Heart right ventricle (tissue), 16 donors: ENCODE measurements at regions of chr2 and their contacts with region 1.

Region 1: GRCh38 chr2:69306822-69307578 is 80.0 kb downstream of the GFPT1 start:
- DNase-seq: peak; percentile 81 to 87
- ATAC-seq: peak; percentile 84 to 94 (median 89)
- H3K4me3 ChIP-seq: peak overlapping the region; percentile 42 to 69 (median 60)
- H3K27ac ChIP-seq: peak overlapping the region; percentile 51 to 90 (median 76)
- H3K4me1 ChIP-seq: peaks cover 3 to 48% (median 33%) of the 10 kb centered on the region in 9 donors
- H3K27me3 ChIP-seq: peaks cover 0 to 22% (median 8%) of the 10 kb centered on the region in 7 donors
- CTCF ChIP-seq: peak in 8 of 9 donors; percentile 77 to 91 (median 86)

Region 2: GRCh38 chr2:68943581-68944568 is 363.1 kb before region 1 on chr2:
- intact Hi-C with region 1: loop called in 9 of 10 experiments (anchors 1 to 10 kb)
- DNase-seq: peak; percentile 15 to 58
- ATAC-seq: peak; percentile 16 to 80 (median 74)
- H3K4me3 ChIP-seq: no peak overlapping the region
- H3K27ac ChIP-seq: no peak overlapping the region
- H3K4me1 ChIP-seq: peaks cover 0 to 10% (median 0%) of the 10 kb centered on the region in 9 donors
- H3K27me3 ChIP-seq: peaks cover 0 to 10% (median 3%) of the 10 kb centered on the region in 7 donors
- CTCF ChIP-seq: peak; percentile 63 to 88 (median 84)

Region 3: GRCh38 chr2:69012310-69013141 is 294.5 kb before region 1 on chr2:
- intact Hi-C with region 1: loop called in 7 of 10 experiments (anchors 1 to 5 kb)
- DNase-seq: peak; percentile 74 to 75
- ATAC-seq: peak; percentile 66 to 78 (median 74)
- H3K4me3 ChIP-seq: peak overlapping the region; percentile 53 to 89 (median 74)
- H3K27ac ChIP-seq: peak overlapping the region in 8 of 10 donors; percentile 56 to 86 (median 79)
- H3K4me1 ChIP-seq: peaks cover 0 to 32% (median 21%) of the 10 kb centered on the region in 9 donors
- H3K27me3 ChIP-seq: peaks cover 0 to 61% (median 38%) of the 10 kb centered on the region in 7 donors
- CTCF ChIP-seq: peak; percentile 56 to 83 (median 72)

Region 4: DNA sequence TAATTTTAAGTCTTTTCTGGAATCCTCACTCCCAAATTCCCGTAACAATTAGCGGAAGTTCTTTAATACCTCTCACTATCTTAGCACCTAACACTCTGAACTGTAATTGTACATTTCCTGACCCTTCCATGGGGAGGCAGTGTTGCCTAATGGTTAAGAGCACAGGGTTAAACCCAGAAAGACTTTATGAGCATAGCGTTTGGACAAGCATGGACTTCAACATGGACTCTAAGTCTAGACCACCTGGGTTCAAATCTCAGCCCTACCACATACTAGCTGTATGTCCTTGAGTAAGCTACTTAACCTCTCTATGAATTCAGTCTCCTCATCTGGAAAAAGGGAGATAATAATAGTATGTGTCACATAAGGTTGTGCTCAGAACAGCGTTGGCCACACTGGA is 281.0 kb before region 1 on chr2:
- intact Hi-C with region 1: loop called in 9 of 10 experiments (anchors 1 to 5 kb)
- DNase-seq: peak in 1 of 2 donors; percentile 41
- ATAC-seq: peak; percentile 67 to 91 (median 76)
- H3K4me3 ChIP-seq: no peak overlapping the region
- H3K27ac ChIP-seq: no peak overlapping the region
- H3K4me1 ChIP-seq: peaks cover 0 to 13% (median 2%) of the 10 kb centered on the region in 9 donors
- H3K27me3 ChIP-seq: peaks cover 0 to 1% (median 0%) of the 10 kb centered on the region in 7 donors
- CTCF ChIP-seq: peak; percentile 23 to 72 (median 64)

Region 5: DNA sequence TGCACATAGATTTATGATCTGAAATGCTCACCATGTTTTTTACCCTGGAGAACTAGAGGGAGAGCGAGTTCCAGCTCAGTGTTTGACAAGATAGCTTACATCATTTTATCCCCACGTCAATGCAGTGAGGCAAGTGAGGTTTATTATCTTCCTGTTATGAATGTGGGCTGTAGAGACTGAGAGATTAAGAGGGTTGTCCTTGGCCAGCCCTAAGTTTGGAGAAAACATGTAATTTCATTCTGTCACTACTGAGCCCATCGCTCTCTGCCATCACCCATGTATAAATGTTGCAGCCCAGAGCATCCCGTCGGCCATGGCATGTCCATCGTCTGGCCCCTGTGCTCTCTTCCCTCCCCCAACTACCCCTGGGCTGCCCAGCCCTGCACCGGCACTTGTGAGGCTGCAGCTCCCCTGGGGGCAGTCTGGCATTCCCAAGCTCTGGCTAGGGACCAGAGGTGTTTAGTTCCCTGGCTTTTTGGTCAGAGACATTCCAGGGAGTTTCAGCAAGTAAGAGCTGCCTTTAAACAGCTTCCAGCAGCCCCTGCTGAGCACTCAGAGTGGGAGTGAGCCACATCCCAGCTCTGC is 157.3 kb before region 1 on chr2:
- intact Hi-C with region 1: loop called in 1 of 10 experiments (anchors 10 kb)
- DNase-seq: peak; percentile 41 to 53
- ATAC-seq: peak; percentile 29 to 61 (median 46)
- H3K4me3 ChIP-seq: no peak overlapping the region
- H3K27ac ChIP-seq: peak overlapping the region in 8 of 10 donors; percentile 46 to 66 (median 56)
- H3K4me1 ChIP-seq: peaks cover 15 to 60% (median 38%) of the 10 kb centered on the region in 9 donors
- H3K27me3 ChIP-seq: no peaks in the 10 kb centered on the region
- CTCF ChIP-seq: no peak

Region 6: DNA sequence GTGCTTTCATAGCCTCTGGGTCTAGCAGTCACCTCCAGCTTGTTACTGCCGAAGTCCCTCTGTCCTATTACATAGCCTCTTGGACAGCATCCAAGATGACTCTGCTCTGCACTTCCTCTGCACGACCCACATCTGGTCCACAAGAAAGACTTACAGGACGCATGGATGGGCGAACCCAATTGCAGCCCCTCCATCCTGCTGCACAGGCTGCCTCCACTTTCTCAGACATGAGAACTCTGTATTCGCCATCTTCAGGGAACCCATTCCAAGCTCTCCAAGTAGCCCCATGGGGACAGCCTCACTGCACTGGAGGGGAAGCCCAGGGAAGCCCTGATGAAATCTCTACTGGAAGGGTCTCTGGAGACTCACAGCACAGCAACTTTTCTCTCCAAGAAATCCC is 92.1 kb before region 1 on chr2:
- intact Hi-C with region 1: loop called in 1 of 10 experiments (anchors 10 kb)
- DNase-seq: peak; percentile 20 to 64
- ATAC-seq: peak; percentile 67 to 84 (median 77)
- H3K4me3 ChIP-seq: no peak overlapping the region
- H3K27ac ChIP-seq: peak overlapping the region in 5 of 10 donors; percentile 28 to 71 (median 52)
- H3K4me1 ChIP-seq: peaks cover 0 to 54% (median 35%) of the 10 kb centered on the region in 9 donors
- H3K27me3 ChIP-seq: no peaks in the 10 kb centered on the region
- CTCF ChIP-seq: no peak

Region 7: DNA sequence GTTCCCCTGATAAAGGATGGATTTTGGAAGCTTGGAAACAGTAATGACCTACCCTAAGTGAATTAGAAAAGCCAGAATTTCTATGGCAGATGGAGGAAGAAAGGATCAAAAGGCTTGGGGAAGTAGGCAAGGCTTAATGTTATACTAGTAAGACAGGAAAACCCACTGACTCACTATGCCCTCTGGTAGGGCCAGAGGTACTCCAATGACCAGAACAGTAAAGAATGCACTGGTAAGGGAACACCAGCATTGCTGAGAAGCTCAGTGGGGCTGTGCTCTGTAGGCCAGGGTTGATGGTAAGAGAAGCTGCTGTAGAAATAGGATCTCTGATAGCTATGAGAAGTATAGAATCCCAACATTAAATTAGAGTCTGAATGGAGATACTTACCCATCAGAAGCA is 46.3 kb before region 1 on chr2:
- intact Hi-C with region 1: no loop called
- DNase-seq: no peak
- ATAC-seq: no peak
- H3K4me3 ChIP-seq: no peak overlapping the region
- H3K27ac ChIP-seq: no peak overlapping the region
- H3K4me1 ChIP-seq: peaks cover 0 to 5% (median 3%) of the 10 kb centered on the region in 9 donors
- H3K27me3 ChIP-seq: no peaks in the 10 kb centered on the region
- CTCF ChIP-seq: no peak